Astrocyte of the spinal cord (primary cell): ENCODE measurements at regions of chr14 and their contacts with region 1.

Region 1: GRCh38 chr14:64800000-64800399 is 79.7 kb downstream of the SPTB start:
- DNase-seq: peak; percentile 28
- H3K4me3 ChIP-seq: no peak overlapping the region
- CTCF ChIP-seq: peak; percentile 58

Region 2: GRCh38 chr14:64681796-64682710 is 117.9 kb before region 1 on chr14:
- in situ Hi-C with region 1: no loop called
- DNase-seq: peak; percentile 62
- H3K4me3 ChIP-seq: no peak overlapping the region
- CTCF ChIP-seq: no peak

Region 3: DNA sequence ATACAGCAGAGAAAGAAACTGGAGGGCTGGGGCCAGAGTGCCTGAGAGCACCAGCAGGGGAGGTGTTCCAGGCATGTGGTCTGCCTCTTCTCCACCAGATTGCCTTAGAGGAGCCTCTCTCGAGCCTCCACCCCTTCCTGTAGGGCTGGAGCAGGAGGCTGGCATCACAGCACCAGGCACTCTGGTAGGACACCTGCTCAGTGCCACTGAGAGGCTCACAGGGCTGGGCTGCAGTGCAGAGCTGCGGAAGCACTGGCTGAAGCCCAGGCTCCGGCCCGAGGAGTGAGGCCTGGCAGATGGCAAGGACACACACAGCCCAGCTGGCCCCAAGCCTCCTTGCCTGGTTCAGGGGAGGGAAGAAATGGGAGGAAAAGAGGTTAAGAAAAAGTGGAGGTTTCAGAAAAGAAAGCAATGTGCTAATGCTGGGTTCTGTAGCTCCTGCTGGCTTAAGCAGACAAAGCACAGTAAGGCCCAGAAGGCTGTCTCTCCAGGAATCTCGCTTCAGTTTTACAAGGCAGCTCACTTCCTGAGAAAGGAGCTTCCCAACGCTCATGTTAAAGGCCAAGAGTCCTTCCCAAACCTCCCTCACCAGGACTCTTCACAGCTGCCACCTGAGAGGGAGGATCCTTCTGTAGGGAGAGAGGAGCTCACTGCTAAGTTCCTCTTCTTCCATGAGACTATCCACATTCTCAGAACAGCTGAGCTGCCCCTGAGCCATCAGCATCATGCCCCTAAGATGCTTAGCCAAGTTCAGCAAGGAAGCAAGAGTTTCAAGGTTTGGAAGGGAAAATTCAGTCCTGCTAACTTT is 55.9 kb after region 1 on chr14:
- in situ Hi-C with region 1: no loop called
- DNase-seq: peak; percentile 24
- H3K4me3 ChIP-seq: no peak overlapping the region
- CTCF ChIP-seq: no peak

Region 4: GRCh38 chr14:64891839-64892375 is 91.9 kb after region 1 on chr14:
- in situ Hi-C with region 1: loop called (anchors 25 kb)
- DNase-seq: peak; percentile 79
- H3K4me3 ChIP-seq: no peak overlapping the region
- CTCF ChIP-seq: peak; percentile 55